ENCODE measurements at regions of chr4 and their contacts with region 1.

Region 1: GRCh38 chr4:122758033-122758432 is 25.5 kb downstream of the BBS12 start:
- H3K4me3 ChIP-seq: no peak overlapping the region
- H3K27ac ChIP-seq: no peak overlapping the region
- H3K4me1 ChIP-seq: no peaks in the 10 kb centered on the region
- CTCF ChIP-seq: no peak

Region 2: GRCh38 chr4:122914292-122914904 is 156.4 kb after region 1 on chr4:
- CTCF ChIA-PET with region 1: interaction called, 19 read pairs
- POLR2A ChIA-PET with region 1: no interaction called
- H3K4me3 ChIP-seq: no peak overlapping the region
- H3K27ac ChIP-seq: no peak overlapping the region
- H3K4me1 ChIP-seq: no peaks in the 10 kb centered on the region
- CTCF ChIP-seq: no peak

Region 3: GRCh38 chr4:122930862-122931261 is 172.8 kb after region 1 on chr4:
- CTCF ChIA-PET with region 1: interaction called, 11 read pairs
- POLR2A ChIA-PET with region 1: no interaction called
- H3K4me3 ChIP-seq: no peak overlapping the region
- H3K27ac ChIP-seq: no peak overlapping the region
- H3K4me1 ChIP-seq: no peaks in the 10 kb centered on the region
- CTCF ChIP-seq: no peak

Measured in HEK293 (cell line).